A549 (cell line): ENCODE measurements at regions of chr2 and their contacts with region 1.

Region 1: GRCh38 chr2:219642465-219643080 is 15.1 kb downstream of the SLC4A3 start:
- DNase-seq: peak; percentile 85 to 94
- ATAC-seq: peak; percentile 82 to 95
- H3K4me3 ChIP-seq: no peak overlapping the region
- H3K27ac ChIP-seq: no peak overlapping the region
- H3K4me1 ChIP-seq: peaks cover 10% of the 10 kb centered on the region; the same call in 2 of the 3 replicates
- CTCF ChIP-seq: peak; percentile 97
- EP300 ChIP-seq: no peak
- POLR2A ChIP-seq: no peak
- RAD21 ChIP-seq: peak; percentile 90

Region 2: DNA sequence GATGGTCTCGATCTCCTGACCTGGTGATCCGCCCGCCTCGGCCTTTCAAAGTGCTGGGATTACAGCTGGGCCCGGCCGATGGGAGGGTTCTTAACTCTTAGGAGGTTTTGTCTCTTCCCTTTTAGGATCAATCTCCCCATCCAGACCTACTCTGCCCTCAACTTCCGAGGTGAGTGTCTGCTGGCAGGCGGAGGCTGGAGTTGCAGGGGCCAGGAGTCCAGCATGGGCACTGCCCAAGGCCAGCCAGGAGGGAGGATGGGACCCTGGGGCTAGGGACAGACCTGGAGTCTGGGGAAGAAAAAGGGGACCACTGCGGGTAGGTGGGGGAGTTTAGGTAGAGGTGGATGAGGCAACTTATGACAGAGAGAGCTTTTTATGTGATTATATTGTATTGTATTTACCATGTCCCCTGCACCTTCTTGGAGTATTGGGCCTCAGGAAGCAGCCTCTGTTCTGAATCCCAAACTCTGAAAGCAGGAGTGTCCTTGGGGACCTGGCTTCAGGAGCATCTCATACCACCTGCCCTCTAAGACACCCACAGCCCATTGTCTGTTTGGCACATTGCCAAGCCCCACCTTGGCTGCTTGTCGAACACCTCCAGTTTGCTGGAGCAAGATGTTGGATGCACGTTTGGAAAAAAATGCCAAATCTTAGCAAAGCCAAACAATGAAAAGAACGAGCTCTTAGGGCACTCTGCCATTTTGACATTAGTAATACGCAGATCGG is 218.8 kb before region 1 on chr2:
- CTCF ChIA-PET with region 1: no interaction called
- POLR2A ChIA-PET with region 1: no interaction called
- DNase-seq: no peak
- ATAC-seq: no peak
- H3K4me3 ChIP-seq: no peak overlapping the region
- H3K27ac ChIP-seq: no peak overlapping the region
- H3K4me1 ChIP-seq: no peaks in the 10 kb centered on the region
- CTCF ChIP-seq: no peak
- EP300 ChIP-seq: no peak
- POLR2A ChIP-seq: no peak
- RAD21 ChIP-seq: no peak

Region 3: GRCh38 chr2:219552382-219553167 is 90.0 kb before region 1 on chr2:
- CTCF ChIA-PET with region 1: interaction called, 19 read pairs
- POLR2A ChIA-PET with region 1: no interaction called
- DNase-seq: peak; percentile 75 to 80
- ATAC-seq: peak; percentile 76 to 90
- H3K4me3 ChIP-seq: peak overlapping the region; percentile 76
- H3K27ac ChIP-seq: peak overlapping the region; percentile 70 to 81
- H3K4me1 ChIP-seq: peaks cover 16% of the 10 kb centered on the region
- CTCF ChIP-seq: no peak
- EP300 ChIP-seq: no peak
- POLR2A ChIP-seq: peak; percentile 31
- RAD21 ChIP-seq: no peak

Region 4: GRCh38 chr2:219619235-219619634 is 23.3 kb before region 1 on chr2:
- CTCF ChIA-PET with region 1: interaction called, 10 read pairs
- POLR2A ChIA-PET with region 1: no interaction called
- DNase-seq: no peak
- ATAC-seq: no peak; a peak in 1 of 6 replicates
- H3K4me3 ChIP-seq: no peak overlapping the region
- H3K27ac ChIP-seq: no peak overlapping the region
- H3K4me1 ChIP-seq: no peaks in the 10 kb centered on the region
- CTCF ChIP-seq: no peak
- EP300 ChIP-seq: no peak
- POLR2A ChIP-seq: no peak
- RAD21 ChIP-seq: no peak

Region 5: GRCh38 chr2:219627103-219628100 is 15.2 kb before region 1 on chr2 and contains the start of gene SLC4A3:
- CTCF ChIA-PET with region 1: interaction called, 38 read pairs
- POLR2A ChIA-PET with region 1: no interaction called
- DNase-seq: peak in 1 of 2 experiments; percentile 53
- ATAC-seq: peak; percentile 60 to 81
- H3K4me3 ChIP-seq: peak within 1 kb of the TSS; percentile 85
- H3K27ac ChIP-seq: peak within 1 kb of the TSS; percentile 80 to 96
- H3K4me1 ChIP-seq: peaks cover 8% of the 10 kb centered on the region; the same call in 2 of the 3 replicates
- CTCF ChIP-seq: no peak; the same call in 2 of the 3 replicates
- EP300 ChIP-seq: no peak
- POLR2A ChIP-seq: no peak; the same call in 1 of the 2 replicates
- RAD21 ChIP-seq: no peak
- polyA plus RNA-seq, gene SLC4A3: 1.4 and 1.7 TPM in 2 replicates